Activated naive CD8-positive, alpha-beta T cell treated with anti-CD3 and anti-CD28 coated beads, Interleukin-2, amount 10 ng/mL, durations not matched to agents 7 days and 5 days (primary cell): ENCODE measurements at regions of chr12 and their contacts with region 1.

Region 1: GRCh38 chr12:104456417-104456949 is at the start of gene CHST11:
- DNase-seq: no peak
- ATAC-seq: peak; percentile 75
- H3K4me3 Mint-ChIP-seq: peak within 1 kb of the TSS; percentile 99
- H3K27ac Mint-ChIP-seq: peak within 1 kb of the TSS; percentile 94
- H3K4me1 Mint-ChIP-seq: peaks cover 29% of the 10 kb centered on the region
- H3K27me3 Mint-ChIP-seq: no peaks in the 10 kb centered on the region
- total RNA-seq, gene CHST11: 64.9 to 72.9 TPM

Region 2: GRCh38 chr12:104467346-104467837 is 10.9 kb after region 1 on chr12:
- POLR2A ChIA-PET with region 1: interaction called, 21 read pairs
- DNase-seq: no peak
- ATAC-seq: peak; percentile 48
- H3K4me3 Mint-ChIP-seq: peak overlapping the region; percentile 71
- H3K27ac Mint-ChIP-seq: peak overlapping the region; percentile 78
- H3K4me1 Mint-ChIP-seq: peaks cover 81% of the 10 kb centered on the region
- H3K27me3 Mint-ChIP-seq: no peaks in the 10 kb centered on the region

Region 3: GRCh38 chr12:104478396-104479122 is 22.1 kb after region 1 on chr12:
- POLR2A ChIA-PET with region 1: interaction called, 63 read pairs
- DNase-seq: peak; percentile 43
- ATAC-seq: peak; percentile 78
- H3K4me3 Mint-ChIP-seq: peak overlapping the region; percentile 94
- H3K27ac Mint-ChIP-seq: peak overlapping the region; percentile 96
- H3K4me1 Mint-ChIP-seq: peaks cover 73% of the 10 kb centered on the region
- H3K27me3 Mint-ChIP-seq: no peaks in the 10 kb centered on the region

Region 4: GRCh38 chr12:104494137-104494792 is 37.8 kb after region 1 on chr12:
- POLR2A ChIA-PET with region 1: interaction called, 16 read pairs
- DNase-seq: no peak
- ATAC-seq: peak; percentile 65
- H3K4me3 Mint-ChIP-seq: peak overlapping the region; percentile 77
- H3K27ac Mint-ChIP-seq: peak overlapping the region; percentile 90
- H3K4me1 Mint-ChIP-seq: peaks cover 73% of the 10 kb centered on the region
- H3K27me3 Mint-ChIP-seq: no peaks in the 10 kb centered on the region

Region 5: DNA sequence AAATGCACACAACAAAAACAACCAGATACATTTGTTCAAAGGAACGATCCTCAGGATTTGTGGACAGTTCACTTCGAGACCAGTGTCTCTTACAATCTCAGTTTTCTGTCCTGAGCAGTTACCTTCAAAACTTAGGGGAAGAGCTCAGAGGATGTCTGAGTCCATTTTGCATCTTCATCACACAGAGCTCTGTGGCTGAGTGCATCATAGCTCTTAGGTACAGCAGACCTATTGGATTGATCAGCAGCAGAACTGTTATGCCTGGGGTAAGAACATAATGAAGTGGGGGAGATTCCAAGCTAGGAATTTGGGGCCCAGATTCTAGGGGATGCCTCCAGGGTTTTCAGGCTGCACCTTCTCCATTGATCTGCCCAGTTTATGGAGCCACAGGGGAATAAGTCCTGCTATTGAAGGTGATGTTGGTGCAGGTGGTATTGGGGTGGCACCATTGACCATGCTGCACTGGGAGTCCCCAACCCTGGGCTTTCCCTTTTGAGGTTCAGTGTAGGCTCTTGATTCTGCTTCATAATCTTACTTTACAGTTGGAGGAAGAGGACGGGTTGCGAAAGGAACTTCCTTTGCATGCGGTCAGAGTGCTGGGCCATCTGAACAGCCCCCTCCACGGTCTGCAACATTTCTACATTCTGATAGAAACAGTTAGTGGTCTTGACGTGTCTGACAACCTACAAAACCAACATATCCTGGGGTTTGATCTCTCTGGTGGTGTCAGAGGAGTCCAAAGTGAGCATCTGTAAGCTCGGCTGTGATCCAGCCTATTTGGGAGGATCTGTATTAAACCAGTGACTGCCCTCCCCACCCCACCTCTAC is 113.1 kb after region 1 on chr12:
- POLR2A ChIA-PET with region 1: interaction called, 25 read pairs
- DNase-seq: peak; percentile 53
- ATAC-seq: peak; percentile 96
- H3K4me3 Mint-ChIP-seq: peak overlapping the region; percentile 82
- H3K27ac Mint-ChIP-seq: peak overlapping the region; percentile 95
- H3K4me1 Mint-ChIP-seq: peaks cover 59% of the 10 kb centered on the region
- H3K27me3 Mint-ChIP-seq: no peaks in the 10 kb centered on the region